ENCODE measurements at regions of chr2 and their contacts with region 1.

Region 1: GRCh38 chr2:30165050-30165520 is 18.3 kb downstream of the YPEL5 start:
- DNase-seq: peak; percentile 80
- ATAC-seq: peak; percentile 100
- H3K4me3 Mint-ChIP-seq: no peak overlapping the region
- H3K27ac Mint-ChIP-seq: no peak overlapping the region
- H3K4me1 Mint-ChIP-seq: peaks cover 21% of the 10 kb centered on the region
- H3K27me3 Mint-ChIP-seq: no peaks in the 10 kb centered on the region
- CTCF ChIP-seq: peak; percentile 82

Region 2: DNA sequence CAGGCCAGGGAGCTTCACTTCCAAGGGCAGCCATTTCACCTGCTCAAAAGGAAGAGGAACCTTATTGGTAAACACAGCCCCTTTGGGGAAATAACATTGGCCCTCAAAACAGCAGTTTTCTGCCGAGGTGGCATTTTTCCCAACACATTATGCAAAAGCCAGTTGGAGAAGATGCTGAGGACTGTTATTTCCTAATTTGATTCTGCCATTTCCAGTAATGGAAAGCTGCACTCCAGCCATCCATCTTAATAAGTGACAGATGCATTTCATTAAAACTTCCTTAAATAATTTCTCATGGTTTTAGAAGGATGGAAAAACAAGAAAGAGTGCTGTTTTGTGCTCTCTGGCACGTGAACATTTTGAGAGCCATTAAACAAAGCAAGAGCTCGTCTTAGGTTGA is 187.8 kb before region 1 on chr2:
- CTCF ChIA-PET with region 1: no interaction called
- POLR2A ChIA-PET with region 1: no interaction called
- intact Hi-C with region 1: no loop called
- DNase-seq: no peak
- ATAC-seq: no peak
- H3K4me3 Mint-ChIP-seq: no peak overlapping the region
- H3K27ac Mint-ChIP-seq: no peak overlapping the region
- H3K4me1 Mint-ChIP-seq: no peaks in the 10 kb centered on the region
- H3K27me3 Mint-ChIP-seq: peaks cover 2% of the 10 kb centered on the region
- CTCF ChIP-seq: no peak

Region 3: GRCh38 chr2:30072250-30072842 is 92.7 kb before region 1 on chr2:
- CTCF ChIA-PET with region 1: no interaction called
- POLR2A ChIA-PET with region 1: no interaction called
- intact Hi-C with region 1: no loop called
- DNase-seq: peak; percentile 82
- ATAC-seq: peak; percentile 91
- H3K4me3 Mint-ChIP-seq: no peak overlapping the region
- H3K27ac Mint-ChIP-seq: no peak overlapping the region
- H3K4me1 Mint-ChIP-seq: no peaks in the 10 kb centered on the region
- H3K27me3 Mint-ChIP-seq: peaks cover 22% of the 10 kb centered on the region
- CTCF ChIP-seq: peak; percentile 82

Region 4: DNA sequence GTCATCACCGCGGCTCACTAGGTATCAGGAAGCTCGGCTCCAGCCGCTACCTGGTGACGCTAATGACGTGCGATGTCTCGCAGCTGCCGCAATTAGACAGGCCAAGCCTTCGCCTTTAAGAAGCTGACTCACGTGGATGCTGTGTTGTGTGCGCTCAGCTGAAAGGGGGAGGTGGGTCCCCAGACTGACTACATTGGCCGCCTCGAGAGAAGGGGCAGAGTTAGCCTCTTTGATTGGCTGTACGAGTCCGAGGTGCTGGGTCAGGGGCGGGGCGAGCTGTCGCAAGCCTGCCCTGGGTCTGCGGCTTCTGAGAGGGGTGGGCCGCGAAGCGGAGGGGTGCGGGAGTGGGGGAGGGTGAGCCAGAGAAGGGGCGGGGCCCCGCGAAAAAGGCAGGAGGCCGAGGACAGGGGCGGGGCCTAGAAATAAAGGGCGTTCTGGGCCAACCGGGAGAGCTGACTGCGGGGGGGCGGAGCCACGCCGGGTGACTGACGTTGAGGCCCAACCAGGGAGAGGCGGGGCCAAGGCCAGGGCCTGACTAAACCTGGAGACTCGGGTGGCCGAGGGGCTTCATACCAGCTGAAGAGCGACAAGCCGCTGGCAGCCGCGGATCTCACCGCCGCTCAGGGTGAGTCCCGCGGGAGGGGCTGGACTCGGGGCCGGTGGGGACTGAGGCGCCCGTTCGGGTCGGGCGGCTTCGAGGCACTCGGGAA is 18.5 kb before region 1 on chr2 and contains the start of gene YPEL5:
- CTCF ChIA-PET with region 1: interaction called, 111 read pairs
- POLR2A ChIA-PET with region 1: interaction called, 15 read pairs
- intact Hi-C with region 1: no loop called
- DNase-seq: peak; percentile 99
- ATAC-seq: peak; percentile 92
- H3K4me3 Mint-ChIP-seq: peak within 1 kb of the TSS; percentile 85
- H3K27ac Mint-ChIP-seq: peak within 1 kb of the TSS; percentile 98
- H3K4me1 Mint-ChIP-seq: peaks cover 51% of the 10 kb centered on the region
- H3K27me3 Mint-ChIP-seq: no peaks in the 10 kb centered on the region
- CTCF ChIP-seq: no peak
- total RNA-seq, gene YPEL5: 28.0 to 28.4 TPM

Region 5: GRCh38 chr2:30208452-30208851 is 43.4 kb after region 1 on chr2:
- CTCF ChIA-PET with region 1: interaction called, 94 read pairs
- POLR2A ChIA-PET with region 1: interaction called, 3 read pairs
- intact Hi-C with region 1: no loop called
- DNase-seq: peak; percentile 57
- ATAC-seq: peak; percentile 77
- H3K4me3 Mint-ChIP-seq: no peak overlapping the region
- H3K27ac Mint-ChIP-seq: peak overlapping the region; percentile 33
- H3K4me1 Mint-ChIP-seq: peaks cover 17% of the 10 kb centered on the region
- H3K27me3 Mint-ChIP-seq: no peaks in the 10 kb centered on the region
- CTCF ChIP-seq: peak; percentile 98

Region 6: DNA sequence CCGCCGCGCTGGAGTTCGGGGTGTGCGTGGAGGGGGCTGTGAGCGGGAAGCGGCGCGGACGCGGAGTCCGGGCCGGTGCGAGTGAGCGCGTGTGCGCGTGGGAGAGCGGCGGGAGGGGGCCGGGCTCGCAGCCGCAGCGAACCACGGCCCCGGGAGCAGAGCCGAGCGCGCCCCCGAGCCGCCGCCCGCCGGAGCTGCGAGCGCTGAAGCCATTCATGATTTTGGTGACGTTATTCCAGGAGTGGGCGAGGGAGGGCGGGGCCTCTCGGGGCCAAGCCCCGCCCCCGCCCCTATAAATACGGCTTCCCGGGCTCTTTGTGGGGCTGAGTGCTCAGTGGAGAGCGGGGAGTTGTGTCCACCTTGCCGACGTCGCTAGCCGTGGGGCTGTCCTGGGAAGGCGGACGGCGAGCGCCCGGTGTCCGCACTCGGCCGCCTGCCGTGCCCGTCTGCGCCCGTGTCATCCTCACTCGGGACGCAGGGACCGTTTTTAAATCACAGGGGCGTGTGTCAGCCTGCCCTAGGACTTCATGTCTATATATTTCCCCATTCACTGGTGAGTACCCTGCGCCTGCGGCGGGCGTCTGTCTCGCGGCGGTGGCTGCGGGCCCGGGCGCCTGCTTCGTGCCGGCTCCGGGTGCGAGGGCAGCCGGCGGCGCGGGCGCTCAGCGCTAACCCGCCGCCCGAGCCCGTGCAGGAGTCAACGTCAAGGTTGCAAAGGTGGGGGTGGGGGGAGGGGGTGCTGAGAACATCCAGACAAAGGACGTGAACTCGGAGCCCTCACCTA is 66.3 kb after region 1 on chr2 and contains the start of gene LBH:
- CTCF ChIA-PET with region 1: interaction called, 56 read pairs
- POLR2A ChIA-PET with region 1: interaction called, 4 read pairs
- intact Hi-C with region 1: no loop called
- DNase-seq: peak; percentile 93
- ATAC-seq: peak; percentile 44
- H3K4me3 Mint-ChIP-seq: peak within 1 kb of the TSS; percentile 78
- H3K27ac Mint-ChIP-seq: peak within 1 kb of the TSS; percentile 97
- H3K4me1 Mint-ChIP-seq: peaks cover 63% of the 10 kb centered on the region
- H3K27me3 Mint-ChIP-seq: no peaks in the 10 kb centered on the region
- CTCF ChIP-seq: no peak
- total RNA-seq, gene LBH: 127 to 130 TPM

Region 7: GRCh38 chr2:30373881-30374302 is 208.8 kb after region 1 on chr2:
- CTCF ChIA-PET with region 1: interaction called, 13 read pairs
- POLR2A ChIA-PET with region 1: no interaction called
- intact Hi-C with region 1: no loop called
- DNase-seq: no peak
- ATAC-seq: peak; percentile 51
- H3K4me3 Mint-ChIP-seq: no peak overlapping the region
- H3K27ac Mint-ChIP-seq: no peak overlapping the region
- H3K4me1 Mint-ChIP-seq: peaks cover 24% of the 10 kb centered on the region
- H3K27me3 Mint-ChIP-seq: no peaks in the 10 kb centered on the region
- CTCF ChIP-seq: no peak

Region 8: GRCh38 chr2:30503007-30503694 is 338.1 kb after region 1 on chr2:
- CTCF ChIA-PET with region 1: interaction called, 14 read pairs
- POLR2A ChIA-PET with region 1: no interaction called
- intact Hi-C with region 1: no loop called
- DNase-seq: no peak
- ATAC-seq: peak; percentile 84
- H3K4me3 Mint-ChIP-seq: no peak overlapping the region
- H3K27ac Mint-ChIP-seq: peak overlapping the region; percentile 86
- H3K4me1 Mint-ChIP-seq: peaks cover 35% of the 10 kb centered on the region
- H3K27me3 Mint-ChIP-seq: no peaks in the 10 kb centered on the region
- CTCF ChIP-seq: peak; percentile 48

Measured in activated CD8-positive, alpha-beta T cell treated with anti-CD3 and anti-CD28 coated beads for 36 hours (primary cell).